ENCODE measurements at regions of chr13 and their contacts with region 1.

Region 1: GRCh38 chr13:99041788-99042187 is 63.9 kb upstream of the DOCK9 start:
- DNase-seq: no peak
- ATAC-seq: no peak
- H3K4me3 Mint-ChIP-seq: no peak overlapping the region
- H3K27ac Mint-ChIP-seq: no peak overlapping the region
- H3K4me1 Mint-ChIP-seq: peaks cover 65% of the 10 kb centered on the region
- H3K27me3 Mint-ChIP-seq: no peaks in the 10 kb centered on the region

Region 2: DNA sequence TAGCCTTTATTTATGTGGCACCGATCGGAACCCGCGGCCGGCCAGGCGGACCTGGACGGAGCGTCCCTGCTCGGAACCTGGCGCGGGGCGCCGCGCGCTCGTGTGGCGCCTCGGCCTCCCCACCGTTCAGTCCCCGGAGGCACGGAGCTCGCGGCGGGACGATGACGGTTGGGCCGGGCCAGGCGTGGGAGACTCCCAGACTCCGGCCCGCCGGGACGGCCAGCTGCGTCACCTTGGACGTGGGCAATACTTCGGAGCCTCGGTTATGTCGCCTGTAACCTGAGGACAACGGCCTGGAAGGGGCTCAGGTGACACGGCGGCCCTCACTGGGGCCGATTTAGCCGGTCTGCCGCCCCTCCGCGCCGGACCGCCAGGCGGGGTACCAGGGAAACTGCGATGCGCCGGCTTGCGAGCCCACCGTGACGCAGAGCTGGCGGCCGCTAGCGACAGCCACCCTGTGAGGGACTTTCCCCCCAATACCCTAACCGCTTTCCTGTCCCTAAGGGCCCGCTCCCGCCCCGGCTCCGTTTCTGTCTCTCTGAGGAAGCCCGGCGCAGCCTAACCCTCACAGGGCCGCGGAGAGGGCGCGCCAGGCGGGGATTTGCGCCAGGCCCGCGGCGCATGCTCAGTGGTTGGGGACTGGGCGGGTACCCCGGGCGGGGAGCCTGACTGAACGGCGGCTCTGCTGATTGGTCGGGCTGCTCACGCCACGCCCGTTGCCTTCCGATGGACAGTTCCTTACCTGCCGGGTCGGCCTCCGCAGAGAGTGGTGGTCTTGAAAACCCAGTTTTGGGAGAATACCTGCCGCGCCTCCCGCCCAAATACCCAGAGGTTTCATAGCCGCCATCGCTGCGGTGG is 45.5 kb after region 1 on chr13:
- CTCF ChIA-PET with region 1: interaction called, 10 read pairs
- DNase-seq: peak; percentile 95
- ATAC-seq: peak; percentile 88
- H3K4me3 Mint-ChIP-seq: peak overlapping the region; percentile 99
- H3K27ac Mint-ChIP-seq: peak overlapping the region; percentile 98
- H3K4me1 Mint-ChIP-seq: peaks cover 30% of the 10 kb centered on the region
- H3K27me3 Mint-ChIP-seq: no peaks in the 10 kb centered on the region

Region 3: DNA sequence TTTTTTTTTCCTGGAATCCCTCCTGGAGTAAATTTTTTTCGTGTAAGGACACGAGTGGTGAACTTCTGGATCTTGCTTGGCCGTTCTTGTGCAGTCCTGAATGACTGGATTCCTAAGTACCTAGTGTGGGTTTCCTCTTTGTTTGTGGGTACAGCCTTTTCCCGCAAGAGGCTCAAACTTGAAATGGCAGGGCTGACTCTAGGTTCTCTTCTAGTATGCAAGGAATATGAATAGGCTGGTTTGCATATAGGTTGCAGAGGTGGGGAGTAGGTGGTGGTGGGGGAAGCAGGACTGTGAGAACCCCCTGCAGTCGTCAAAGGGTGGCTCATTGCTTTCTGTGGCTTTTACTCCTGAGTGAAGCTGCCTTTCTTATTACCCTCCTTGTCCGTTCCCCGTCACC is 172.4 kb after region 1 on chr13:
- CTCF ChIA-PET with region 1: no interaction called
- DNase-seq: peak; percentile 62
- ATAC-seq: peak; percentile 23
- H3K4me3 Mint-ChIP-seq: peak overlapping the region; percentile 73
- H3K27ac Mint-ChIP-seq: peak overlapping the region; percentile 94
- H3K4me1 Mint-ChIP-seq: peaks cover 72% of the 10 kb centered on the region
- H3K27me3 Mint-ChIP-seq: no peaks in the 10 kb centered on the region

Region 4: GRCh38 chr13:99636728-99637353 is 595.1 kb after region 1 on chr13:
- CTCF ChIA-PET with region 1: no interaction called
- DNase-seq: no peak
- ATAC-seq: no peak
- H3K4me3 Mint-ChIP-seq: no peak overlapping the region
- H3K27ac Mint-ChIP-seq: no peak overlapping the region
- H3K4me1 Mint-ChIP-seq: peaks cover 3% of the 10 kb centered on the region
- H3K27me3 Mint-ChIP-seq: peaks cover 2% of the 10 kb centered on the region